Posterior vena cava (tissue), 2 donors: ENCODE measurements at regions of chr15 and their contacts with region 1.

Region 1: GRCh38 chr15:50345298-50345697 is 9.7 kb downstream of the GABPB1 start:
- DNase-seq: no peak

Region 2: DNA sequence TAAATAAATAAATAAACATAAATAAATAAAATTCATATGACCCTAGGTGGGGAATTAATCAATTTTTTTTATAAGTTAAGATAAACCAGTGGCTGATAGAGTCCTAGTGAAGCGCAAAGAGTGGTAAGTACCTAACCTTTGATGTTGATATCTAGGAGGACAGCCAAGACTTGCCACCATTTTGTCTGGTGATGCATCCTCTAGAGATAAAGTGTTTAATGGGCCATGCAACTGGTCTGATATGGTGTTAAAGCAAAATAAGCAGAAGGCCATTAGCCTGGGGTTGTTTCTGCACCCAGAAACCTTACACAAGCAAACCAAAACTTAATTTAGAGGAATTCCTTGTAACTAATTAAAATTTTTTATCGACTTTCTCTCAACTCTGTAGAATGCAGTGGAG is 69.3 kb after region 1 on chr15:
- intact Hi-C with region 1: no loop called
- DNase-seq: no peak

Region 3: GRCh38 chr15:50624616-50625168 is 279.4 kb after region 1 on chr15:
- intact Hi-C with region 1: loop called in 1 of 2 experiments (anchors 5 kb)
- DNase-seq: no peak